ENCODE measurements at regions of chr9 and their contacts with region 1.

Region 1: DNA sequence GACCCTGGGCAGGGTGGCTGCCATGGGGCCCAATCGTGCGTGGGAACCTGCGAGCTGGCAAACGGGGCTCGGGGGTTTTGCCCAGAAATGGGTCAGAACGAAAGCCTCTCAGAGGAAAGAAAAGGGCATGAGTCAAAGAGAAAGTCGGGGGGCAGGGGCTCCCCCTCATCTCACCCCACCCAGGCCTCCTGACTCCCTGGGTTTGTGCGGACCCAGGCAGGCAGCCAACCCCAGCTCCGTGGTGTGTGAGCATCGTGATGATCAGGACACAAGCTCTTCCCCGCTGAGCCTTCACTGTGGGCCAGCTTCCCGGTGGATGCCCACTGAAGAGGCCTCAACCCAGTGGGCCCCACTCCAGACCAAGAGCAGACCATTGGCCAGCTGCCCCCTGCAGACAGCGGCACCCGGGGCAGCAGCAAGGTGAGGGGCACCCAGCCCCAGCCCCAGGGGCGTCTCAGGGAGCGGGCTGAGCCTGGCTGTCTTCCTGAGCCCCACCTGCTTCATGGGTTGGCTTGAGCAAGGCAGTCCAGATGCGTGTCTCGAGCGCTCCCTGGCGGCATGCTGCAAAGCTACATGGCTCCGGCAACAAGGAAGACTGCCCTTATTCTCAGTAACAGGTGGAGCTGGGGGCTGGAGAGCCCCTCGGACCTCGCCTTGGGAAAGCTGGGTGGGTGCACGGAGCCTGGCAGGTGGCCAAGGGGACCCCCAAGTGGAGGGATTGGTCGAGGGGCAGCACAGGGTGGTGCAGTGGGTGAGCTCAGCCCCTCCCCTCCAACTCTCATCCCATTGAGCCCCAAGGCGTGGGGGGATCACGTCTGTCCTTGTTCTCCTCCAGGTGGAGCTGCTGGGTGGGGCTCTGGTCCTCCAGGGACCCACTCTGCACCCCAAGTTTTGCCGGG is 3.2 kb upstream of the FUT7 start:
- DNase-seq: peak; percentile 76 to 86
- ATAC-seq: peak; percentile 67 to 89 (median 79)
- H3K4me3 ChIP-seq: peak overlapping the region in 1 of 10 donors; percentile 15
- H3K27ac ChIP-seq: peak overlapping the region in 2 of 10 donors; percentile 6 to 83
- H3K4me1 ChIP-seq: peaks cover 6 to 43% (median 11%) of the 10 kb centered on the region in 9 donors
- H3K27me3 ChIP-seq: no peaks in the 10 kb centered on the region
- CTCF ChIP-seq: peak; percentile 88 to 95 (median 93)

Region 2: GRCh38 chr9:136784249-136784996 is 250.7 kb before region 1 on chr9:
- intact Hi-C with region 1: loop called in 9 of 10 experiments (anchors 1 to 5 kb)
- DNase-seq: no peak
- ATAC-seq: no peak
- H3K4me3 ChIP-seq: no peak overlapping the region
- H3K27ac ChIP-seq: no peak overlapping the region
- H3K4me1 ChIP-seq: peaks cover 0 to 15% (median 3%) of the 10 kb centered on the region in 9 donors
- H3K27me3 ChIP-seq: no peaks in the 10 kb centered on the region
- CTCF ChIP-seq: peak in 8 of 9 donors; percentile 11 to 61 (median 50)

Region 3: GRCh38 chr9:137077010-137077747 is 42.1 kb after region 1 on chr9 and contains the start of gene UAP1L1:
- intact Hi-C with region 1: no loop called
- DNase-seq: peak; percentile 80 to 83
- ATAC-seq: peak; percentile 33 to 80 (median 64)
- H3K4me3 ChIP-seq: peak within 1 kb of the TSS; percentile 37 to 79 (median 72)
- H3K27ac ChIP-seq: peak within 1 kb of the TSS; percentile 16 to 82 (median 62)
- H3K4me1 ChIP-seq: peaks cover 8 to 37% (median 13%) of the 10 kb centered on the region in 9 donors
- H3K27me3 ChIP-seq: no peaks in the 10 kb centered on the region
- CTCF ChIP-seq: no peak
- total RNA-seq, gene UAP1L1: 6.0 to 16.5 (median 8.5) TPM